T-cell (primary cell): ENCODE measurements at regions of chr1 and their contacts with region 1.

Region 1: DNA sequence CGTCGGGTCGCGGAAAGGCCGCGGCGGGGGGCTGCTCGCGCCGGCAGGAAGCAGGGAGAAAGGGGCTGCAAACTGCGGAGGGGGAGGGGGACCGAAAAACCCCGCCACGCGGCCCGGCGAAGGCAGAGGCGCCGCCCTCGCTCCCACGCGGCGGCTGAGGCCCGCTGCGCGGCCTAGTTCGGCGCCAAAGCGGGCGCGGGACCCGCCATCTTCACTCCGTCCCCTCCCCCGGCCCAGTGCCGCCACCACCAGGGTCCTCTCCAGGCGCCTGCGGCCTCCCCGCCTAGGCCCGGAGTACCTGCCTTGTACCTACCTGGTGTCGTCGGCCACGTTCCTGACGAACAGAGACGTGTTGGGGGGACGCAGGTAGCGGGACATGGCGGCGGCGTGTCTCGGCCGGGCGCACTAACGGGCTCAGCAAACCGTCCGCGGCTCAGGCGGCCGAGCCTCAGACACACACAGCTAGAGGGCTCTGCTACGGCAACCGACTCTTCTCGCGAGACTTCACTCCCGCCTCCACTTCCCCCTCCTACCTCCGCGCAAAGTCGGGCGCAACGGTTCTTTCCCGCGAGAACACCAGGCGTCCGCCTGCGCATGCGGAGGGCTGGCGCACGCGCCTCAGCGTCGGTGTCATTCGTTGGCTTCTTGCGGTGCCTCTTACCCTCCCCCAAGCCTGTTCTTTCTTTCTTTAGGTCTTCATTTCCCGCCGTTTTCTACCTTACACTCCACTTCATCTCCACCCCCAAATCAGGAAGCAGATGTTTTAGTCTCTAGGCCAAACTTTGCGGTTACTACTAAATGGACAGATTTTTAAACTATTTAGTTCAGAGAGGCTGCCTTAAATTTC is at the start of gene SRSF10:
- DNase-seq: peak; percentile 94 to 100 (median 97)
- ATAC-seq: peak; percentile 94 to 98 (median 96)
- H3K4me3 ChIP-seq: peak within 1 kb of the TSS; percentile 77 to 93
- H3K4me3 Mint-ChIP-seq: peak within 1 kb of the TSS; percentile 92 to 97 (median 96)
- H3K27ac ChIP-seq: peak within 1 kb of the TSS; percentile 96
- H3K27ac Mint-ChIP-seq: peak within 1 kb of the TSS; percentile 96 to 97
- H3K4me1 ChIP-seq: peaks cover 16 to 39% of the 10 kb centered on the region in 2 experiments
- H3K4me1 Mint-ChIP-seq: peaks cover 50 to 56% (median 51%) of the 10 kb centered on the region in 3 donors
- H3K27me3 ChIP-seq: no peaks in the 10 kb centered on the region
- H3K27me3 Mint-ChIP-seq: no peaks in the 10 kb centered on the region
- total RNA-seq, gene SRSF10: 145 to 240 (median 153) TPM

Region 2: GRCh38 chr1:23959041-23959460 is 21.1 kb before region 1 on chr1:
- CTCF ChIA-PET with region 1: interaction called in 1 of 2 experiments, 17 read pairs
- POLR2A ChIA-PET with region 1: interaction called in 1 of 2 experiments, 6 read pairs
- DNase-seq: peak; percentile 72 to 97 (median 92)
- ATAC-seq: peak; percentile 84 to 85 (median 84)
- H3K4me3 ChIP-seq: peak overlapping the region; percentile 96 to 98
- H3K4me3 Mint-ChIP-seq: peak overlapping the region; percentile 97 to 100 (median 100)
- H3K27ac ChIP-seq: peak overlapping the region; percentile 98
- H3K27ac Mint-ChIP-seq: peak overlapping the region; percentile 99 to 100
- H3K4me1 ChIP-seq: peaks cover 15 to 21% of the 10 kb centered on the region in 2 experiments
- H3K4me1 Mint-ChIP-seq: peaks cover 52 to 71% (median 69%) of the 10 kb centered on the region in 3 donors
- H3K27me3 ChIP-seq: no peaks in the 10 kb centered on the region
- H3K27me3 Mint-ChIP-seq: no peaks in the 10 kb centered on the region